Posterior vena cava (tissue), 2 donors: ENCODE measurements at regions of chr18 and their contacts with region 1.

Region 1: DNA sequence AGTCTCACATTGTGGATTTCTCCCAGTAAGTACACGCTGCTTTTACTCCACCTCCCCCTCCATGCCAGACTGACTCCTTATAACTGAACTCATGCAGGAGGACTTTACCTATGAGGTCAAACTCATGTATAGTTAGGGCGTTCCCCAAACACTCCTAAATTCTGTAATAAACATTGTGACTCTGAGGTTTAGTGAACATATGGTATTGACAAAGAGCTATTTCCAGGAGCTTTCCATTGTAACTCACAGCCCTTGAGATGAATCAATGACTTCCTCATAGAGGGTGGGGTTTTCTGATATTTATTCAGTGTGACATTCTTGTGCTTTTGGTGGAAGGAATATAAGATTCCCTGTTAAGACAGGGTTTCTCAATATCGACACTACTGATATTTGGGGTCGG is 337.4 kb upstream of the SLC14A2 start:
- DNase-seq: no peak

Region 2: DNA sequence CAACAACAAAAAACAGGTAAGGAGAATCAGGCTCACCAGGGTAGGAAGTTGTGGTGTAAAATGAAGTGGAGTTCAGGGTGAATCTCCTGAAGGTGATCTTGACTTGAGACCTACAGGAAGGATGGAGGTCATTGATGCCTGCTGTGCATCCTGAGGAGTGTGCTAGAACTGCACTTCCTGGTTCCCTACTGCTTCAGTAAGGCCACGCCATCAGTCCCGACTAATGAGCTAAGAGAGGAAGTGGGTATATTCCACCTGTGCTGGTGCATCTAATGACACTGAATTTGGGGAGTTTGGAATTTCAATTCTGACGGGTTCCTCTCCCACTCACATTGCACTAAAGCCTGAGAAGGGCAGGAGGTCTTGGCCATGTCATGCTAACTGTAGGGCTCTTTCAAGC is 11.9 kb before region 1 on chr18:
- intact Hi-C with region 1: loop called in 1 of 2 experiments (anchors 1 kb)
- DNase-seq: no peak

Region 3: DNA sequence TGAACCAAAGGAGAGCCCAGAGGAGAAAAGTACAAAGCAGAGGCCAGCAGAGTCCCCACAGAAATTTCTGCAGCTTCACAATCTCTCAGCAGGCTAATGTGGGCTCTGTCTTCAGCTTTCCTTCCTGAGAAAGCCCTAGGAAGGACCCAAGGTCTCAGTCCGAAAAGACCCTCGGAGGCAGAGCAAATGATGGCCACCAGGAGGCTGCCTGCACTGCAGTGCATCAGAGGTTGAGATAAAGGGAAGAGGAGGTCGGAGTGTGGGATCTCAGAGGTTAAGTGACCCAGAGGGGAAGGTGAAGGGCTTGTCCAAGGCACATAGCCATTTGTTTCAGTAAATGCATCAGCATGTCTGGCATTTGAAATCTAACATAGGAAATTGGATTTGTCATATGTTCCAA is 38.2 kb after region 1 on chr18:
- intact Hi-C with region 1: no loop called
- DNase-seq: no peak

Region 4: DNA sequence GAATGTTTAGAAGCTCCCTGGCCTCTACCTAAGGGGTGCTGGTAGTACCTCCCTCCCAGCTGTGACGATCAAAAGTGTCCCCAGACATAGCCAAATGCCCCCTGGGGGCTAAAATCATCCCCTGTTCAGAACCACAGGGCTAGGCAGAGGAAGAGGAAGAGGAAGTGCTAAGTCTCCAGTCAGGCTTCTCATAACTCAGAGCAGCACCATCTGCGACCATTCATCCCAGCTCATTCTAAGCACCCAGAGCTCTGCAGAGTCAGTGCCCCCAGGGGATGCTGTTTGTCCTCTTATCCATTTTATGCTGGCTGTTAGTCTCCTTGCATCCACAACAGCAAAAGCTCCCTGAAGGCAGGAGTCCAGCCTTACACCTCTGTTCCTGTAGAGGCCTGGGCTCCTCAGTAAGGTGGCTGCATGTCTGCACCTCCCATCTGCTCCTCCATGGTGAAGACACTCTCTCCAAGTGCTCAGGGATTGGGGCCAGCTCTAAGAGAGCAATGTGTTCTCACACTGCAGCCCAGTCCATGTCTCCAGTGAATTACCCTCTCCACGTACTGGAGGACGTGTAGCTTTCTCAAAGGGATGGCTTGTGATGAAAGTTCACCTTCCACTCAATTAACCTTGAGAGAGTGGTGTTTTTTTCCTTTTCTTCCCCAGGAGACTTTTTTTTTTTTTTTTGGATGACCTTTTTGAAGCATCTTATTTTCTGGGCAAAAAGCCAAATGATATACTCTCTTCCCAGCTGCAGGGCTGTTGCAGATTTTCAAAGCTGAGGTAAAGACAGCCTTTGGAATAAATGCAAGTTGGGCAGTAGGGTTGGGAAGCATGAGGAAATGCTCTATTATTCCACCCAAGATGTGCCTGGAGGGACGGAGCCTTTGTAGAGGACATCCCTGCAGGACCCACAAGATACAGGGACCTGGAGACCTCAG is 178.4 kb after region 1 on chr18:
- intact Hi-C with region 1: no loop called
- DNase-seq: no peak